Natural killer cell (primary cell): ENCODE measurements at regions of chr22 and their contacts with region 1.

Region 1: GRCh38 chr22:43263645-43264514 is 76.9 kb upstream of the TTLL12 start:
- DNase-seq: peak; percentile 86 to 96
- ATAC-seq: peak; percentile 76 to 88 (median 86)
- H3K4me3 ChIP-seq: peak overlapping the region; percentile 21
- H3K4me3 Mint-ChIP-seq: peak overlapping the region; percentile 91
- H3K27ac ChIP-seq: peak overlapping the region; percentile 85
- H3K27ac Mint-ChIP-seq: peak overlapping the region; percentile 96 to 97
- H3K4me1 ChIP-seq: peaks cover 52% of the 10 kb centered on the region
- H3K4me1 Mint-ChIP-seq: peaks cover 36 to 55% of the 10 kb centered on the region in 2 donors
- H3K27me3 ChIP-seq: no peaks in the 10 kb centered on the region
- H3K27me3 Mint-ChIP-seq: no peaks in the 10 kb centered on the region
- CTCF ChIP-seq: no peak

Region 2: DNA sequence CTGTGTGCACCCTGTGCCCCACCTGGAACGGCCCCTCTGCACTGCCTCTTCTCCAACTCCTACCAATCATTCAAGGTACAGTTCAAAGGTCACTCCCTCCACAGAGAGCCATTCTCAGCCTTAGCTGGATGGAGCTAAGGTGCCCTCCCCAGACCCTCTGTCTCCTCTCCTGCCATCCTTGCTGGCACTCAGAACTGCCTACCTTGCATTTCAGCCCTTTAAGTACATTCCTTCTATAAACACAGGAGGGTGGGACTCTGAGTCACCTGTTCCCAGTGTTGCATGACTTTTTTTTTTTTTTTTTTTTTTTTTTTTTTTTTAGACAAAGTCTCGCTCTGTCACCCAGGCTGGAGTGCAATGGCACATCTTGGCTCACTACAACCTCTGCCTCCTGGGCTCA is 183.3 kb before region 1 on chr22:
- intact Hi-C with region 1: no loop called
- DNase-seq: no peak
- ATAC-seq: no peak
- H3K4me3 ChIP-seq: no peak overlapping the region
- H3K4me3 Mint-ChIP-seq: no peak overlapping the region
- H3K27ac ChIP-seq: no peak overlapping the region
- H3K27ac Mint-ChIP-seq: peak overlapping the region in 1 of 2 donors; percentile 79
- H3K4me1 ChIP-seq: peaks cover 24% of the 10 kb centered on the region
- H3K4me1 Mint-ChIP-seq: peaks cover 17 to 30% of the 10 kb centered on the region in 2 donors
- H3K27me3 ChIP-seq: no peaks in the 10 kb centered on the region
- H3K27me3 Mint-ChIP-seq: no peaks in the 10 kb centered on the region
- CTCF ChIP-seq: no peak

Region 3: DNA sequence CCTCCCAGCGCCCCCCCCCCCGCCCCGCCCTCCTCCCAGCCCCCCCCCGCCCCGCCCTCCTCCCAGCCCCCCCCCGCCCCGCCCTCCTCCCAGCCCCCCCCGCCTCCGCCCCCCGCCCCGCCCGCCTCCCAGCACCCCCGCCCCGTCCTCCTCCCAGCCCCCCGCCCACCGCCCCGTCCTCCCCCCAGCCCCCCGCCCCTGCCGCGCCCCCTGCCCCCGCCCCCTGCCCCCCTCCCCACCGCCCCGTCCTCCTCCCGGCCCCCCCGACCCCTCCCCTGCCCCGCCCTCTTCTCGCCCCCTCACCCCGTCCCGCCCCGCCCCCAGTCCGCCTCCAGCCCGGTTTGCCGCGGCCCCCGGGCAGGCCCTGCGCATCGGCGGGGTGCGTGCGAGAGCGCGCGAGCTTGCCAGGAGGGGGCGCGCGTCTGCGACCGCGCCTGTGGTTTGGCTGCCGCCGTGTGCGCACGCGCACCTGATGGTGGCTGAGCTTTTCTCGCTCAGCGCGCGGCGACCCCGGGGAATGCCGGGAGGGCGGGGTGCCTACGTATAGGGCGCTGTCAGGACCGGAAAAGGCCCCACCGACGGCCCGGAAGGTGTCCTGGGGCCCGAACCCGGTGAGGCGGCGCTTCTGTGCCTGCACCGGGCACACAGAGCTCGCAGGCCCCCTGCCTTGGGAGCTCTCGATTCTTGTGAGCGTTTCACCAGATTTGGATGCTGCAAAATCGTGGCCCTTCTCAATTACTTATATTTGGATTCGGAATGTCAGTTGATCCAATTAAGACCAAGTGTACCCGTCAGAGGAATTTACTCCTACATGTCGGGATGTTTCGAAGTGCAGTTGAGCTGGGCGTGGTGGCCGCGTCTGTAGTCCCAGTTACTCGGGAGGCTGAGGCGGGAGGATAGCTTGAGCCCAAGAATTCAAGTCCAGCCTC is 76.4 kb before region 1 on chr22:
- intact Hi-C with region 1: loop called (anchors 2 kb)
- DNase-seq: peak; percentile 94 to 99
- ATAC-seq: peak; percentile 87 to 94 (median 89)
- H3K4me3 ChIP-seq: peak overlapping the region; percentile 36
- H3K4me3 Mint-ChIP-seq: peak overlapping the region; percentile 79
- H3K27ac ChIP-seq: peak overlapping the region; percentile 85
- H3K27ac Mint-ChIP-seq: peak overlapping the region; percentile 91 to 93
- H3K4me1 ChIP-seq: peaks cover 19% of the 10 kb centered on the region
- H3K4me1 Mint-ChIP-seq: peaks cover 4 to 12% of the 10 kb centered on the region in 2 donors
- H3K27me3 ChIP-seq: no peaks in the 10 kb centered on the region
- H3K27me3 Mint-ChIP-seq: no peaks in the 10 kb centered on the region
- CTCF ChIP-seq: peak; percentile 51

Region 4: GRCh38 chr22:43289976-43290721 is 26.3 kb after region 1 on chr22:
- intact Hi-C with region 1: loop called (anchors 2 kb)
- DNase-seq: no peak
- ATAC-seq: no peak
- H3K4me3 ChIP-seq: no peak overlapping the region
- H3K4me3 Mint-ChIP-seq: peak overlapping the region; percentile 49
- H3K27ac ChIP-seq: no peak overlapping the region
- H3K27ac Mint-ChIP-seq: peak overlapping the region in 1 of 2 donors; percentile 91
- H3K4me1 ChIP-seq: peaks cover 26% of the 10 kb centered on the region
- H3K4me1 Mint-ChIP-seq: peaks cover 19 to 29% of the 10 kb centered on the region in 2 donors
- H3K27me3 ChIP-seq: no peaks in the 10 kb centered on the region
- H3K27me3 Mint-ChIP-seq: no peaks in the 10 kb centered on the region
- CTCF ChIP-seq: no peak

Region 5: DNA sequence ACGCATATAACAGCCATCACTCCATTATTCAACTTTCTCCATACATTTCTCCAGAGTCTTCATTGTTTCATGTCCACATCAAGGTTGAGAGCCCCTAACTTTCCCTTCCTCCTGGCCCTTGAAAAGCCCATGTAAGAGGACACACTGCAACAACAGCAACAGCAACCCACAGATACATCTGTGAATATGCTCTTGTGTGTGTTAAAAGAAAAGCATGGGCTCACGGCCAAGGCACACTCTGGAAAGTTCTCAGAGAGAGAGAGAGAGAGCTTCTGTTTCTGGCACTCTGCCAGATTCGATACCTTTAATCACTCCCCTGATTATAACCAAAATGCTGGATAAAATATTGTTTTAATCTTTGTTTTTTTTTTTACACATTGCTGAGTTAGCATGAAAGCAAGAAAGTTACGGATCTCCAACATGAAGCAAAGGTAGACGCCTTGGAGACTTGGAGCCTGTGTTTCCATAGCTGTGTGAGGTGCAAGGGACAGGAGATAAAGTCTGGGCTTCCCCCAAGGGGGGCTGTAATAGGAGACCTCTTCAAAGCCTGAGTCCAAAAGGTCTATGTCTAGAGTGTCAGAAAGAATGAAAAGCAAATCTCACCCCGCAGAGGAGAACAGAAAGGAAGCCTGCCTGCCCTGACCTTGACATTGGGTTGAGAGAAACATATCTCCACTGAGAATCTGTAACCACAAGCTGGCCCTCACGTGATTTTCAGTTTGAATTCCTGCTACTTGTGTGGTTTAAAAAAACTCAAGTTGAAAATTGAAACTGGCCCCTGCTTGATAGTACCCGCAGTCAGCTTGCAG is 114.2 kb after region 1 on chr22:
- intact Hi-C with region 1: loop called (anchors 1 kb)
- DNase-seq: peak in 1 of 2 donors; percentile 24
- ATAC-seq: peak in 1 of 3 donors; percentile 20
- H3K4me3 ChIP-seq: no peak overlapping the region
- H3K4me3 Mint-ChIP-seq: peak overlapping the region; percentile 81
- H3K27ac ChIP-seq: no peak overlapping the region
- H3K27ac Mint-ChIP-seq: peak overlapping the region; percentile 39 to 50
- H3K4me1 ChIP-seq: peaks cover 35% of the 10 kb centered on the region
- H3K4me1 Mint-ChIP-seq: peaks cover 27 to 31% of the 10 kb centered on the region in 2 donors
- H3K27me3 ChIP-seq: peaks cover 37% of the 10 kb centered on the region
- H3K27me3 Mint-ChIP-seq: peaks cover 71 to 97% of the 10 kb centered on the region in 2 donors
- CTCF ChIP-seq: no peak

Region 6: GRCh38 chr22:43412808-43413795 is 149.2 kb after region 1 on chr22:
- intact Hi-C with region 1: no loop called
- DNase-seq: no peak
- ATAC-seq: no peak
- H3K4me3 ChIP-seq: no peak overlapping the region
- H3K4me3 Mint-ChIP-seq: no peak overlapping the region
- H3K27ac ChIP-seq: no peak overlapping the region
- H3K27ac Mint-ChIP-seq: no peak overlapping the region
- H3K4me1 ChIP-seq: no peaks in the 10 kb centered on the region
- H3K4me1 Mint-ChIP-seq: no peaks in the 10 kb centered on the region
- H3K27me3 ChIP-seq: peaks cover 3% of the 10 kb centered on the region
- H3K27me3 Mint-ChIP-seq: peaks cover 51 to 64% of the 10 kb centered on the region in 2 donors
- CTCF ChIP-seq: no peak